Caco-2 (cell line): ENCODE measurements at regions of chr1 and their contacts with region 1.

Region 1: DNA sequence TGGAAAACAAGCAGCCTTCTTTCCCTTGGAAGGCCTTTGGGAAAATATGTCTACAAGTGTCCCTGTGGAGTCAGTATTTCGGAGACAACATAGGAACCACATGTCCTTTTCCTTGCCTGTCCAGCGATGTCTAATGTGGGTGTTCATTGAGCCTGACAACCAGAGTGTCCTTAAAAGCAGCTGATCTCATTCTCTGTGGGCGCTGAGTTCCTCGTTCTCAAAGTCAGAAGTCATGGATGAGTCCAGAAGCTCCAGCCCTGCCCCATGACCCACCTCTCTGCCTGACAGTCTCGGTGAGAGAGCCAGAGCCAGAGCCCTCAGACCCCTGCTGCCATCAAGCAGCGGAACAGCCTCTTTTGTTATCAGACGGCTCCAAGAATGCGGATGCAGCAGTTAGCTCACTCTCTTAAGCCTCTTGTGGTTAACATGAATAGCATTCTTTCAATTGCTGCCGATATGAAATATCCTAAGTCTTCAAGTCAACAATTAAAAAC is 329.2 kb downstream of the TGFB2 start:
- DNase-seq: peak; percentile 72 to 82
- H3K4me3 ChIP-seq: no peak overlapping the region
- H3K4me3 Mint-ChIP-seq: peak overlapping the region; percentile 25
- H3K27ac Mint-ChIP-seq: peak overlapping the region; percentile 79
- H3K4me1 ChIP-seq: peaks cover 12% of the 10 kb centered on the region
- H3K4me1 Mint-ChIP-seq: peaks cover 8% of the 10 kb centered on the region
- H3K27me3 ChIP-seq: no peaks in the 10 kb centered on the region
- H3K27me3 Mint-ChIP-seq: no peaks in the 10 kb centered on the region
- CTCF ChIP-seq: peak in 1 of 2 experiments; percentile 29

Region 2: DNA sequence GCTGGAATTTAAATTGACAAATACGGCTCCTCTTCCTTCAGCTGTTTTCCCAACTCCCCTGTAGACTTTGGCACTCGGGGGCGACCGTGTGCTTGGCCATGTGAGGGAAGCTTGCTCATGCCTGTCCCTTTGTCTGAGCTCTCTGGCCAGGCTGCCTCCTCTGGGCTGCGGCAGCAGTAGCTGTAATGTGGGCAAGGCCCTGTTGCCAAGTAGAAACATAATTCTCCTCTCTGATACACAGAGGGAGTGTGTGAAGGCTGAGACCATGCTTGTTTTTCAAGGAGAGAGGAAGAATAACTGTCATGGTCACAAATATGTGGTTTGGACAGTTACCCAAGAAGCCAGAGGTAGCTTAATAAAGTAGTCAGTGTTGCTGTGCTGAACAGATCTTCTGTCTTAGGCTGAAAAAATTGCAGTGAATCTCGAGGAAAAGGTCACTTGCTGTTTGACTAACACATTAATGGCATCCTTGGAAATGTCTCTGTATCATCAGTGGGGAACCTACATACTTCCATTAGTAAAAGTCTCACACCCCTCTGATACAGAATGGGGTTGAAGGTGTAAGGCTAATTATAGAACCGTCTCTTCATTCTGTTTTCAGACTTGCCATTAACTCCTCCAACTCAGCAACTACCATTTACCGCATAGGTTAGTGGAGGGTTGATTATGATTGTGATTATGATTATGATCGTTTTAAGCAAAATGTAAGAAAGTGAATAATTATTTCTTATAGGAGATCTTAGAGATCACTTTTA is 234.6 kb before region 1 on chr1:
- CTCF ChIA-PET with region 1: no interaction called
- POLR2A ChIA-PET with region 1: no interaction called
- intact Hi-C with region 1: no loop called
- DNase-seq: no peak
- H3K4me3 ChIP-seq: no peak overlapping the region
- H3K4me3 Mint-ChIP-seq: no peak overlapping the region
- H3K27ac Mint-ChIP-seq: no peak overlapping the region
- H3K4me1 ChIP-seq: no peaks in the 10 kb centered on the region
- H3K4me1 Mint-ChIP-seq: no peaks in the 10 kb centered on the region
- H3K27me3 ChIP-seq: no peaks in the 10 kb centered on the region
- H3K27me3 Mint-ChIP-seq: no peaks in the 10 kb centered on the region
- CTCF ChIP-seq: no peak

Region 3: GRCh38 chr1:218557731-218558130 is 116.6 kb before region 1 on chr1:
- CTCF ChIA-PET with region 1: no interaction called
- POLR2A ChIA-PET with region 1: no interaction called
- intact Hi-C with region 1: loop called (anchors 10 kb)
- DNase-seq: no peak
- H3K4me3 ChIP-seq: no peak overlapping the region
- H3K4me3 Mint-ChIP-seq: no peak overlapping the region
- H3K27ac Mint-ChIP-seq: no peak overlapping the region
- H3K4me1 ChIP-seq: no peaks in the 10 kb centered on the region
- H3K4me1 Mint-ChIP-seq: peaks cover 6% of the 10 kb centered on the region
- H3K27me3 ChIP-seq: no peaks in the 10 kb centered on the region
- H3K27me3 Mint-ChIP-seq: no peaks in the 10 kb centered on the region
- CTCF ChIP-seq: no peak

Region 4: DNA sequence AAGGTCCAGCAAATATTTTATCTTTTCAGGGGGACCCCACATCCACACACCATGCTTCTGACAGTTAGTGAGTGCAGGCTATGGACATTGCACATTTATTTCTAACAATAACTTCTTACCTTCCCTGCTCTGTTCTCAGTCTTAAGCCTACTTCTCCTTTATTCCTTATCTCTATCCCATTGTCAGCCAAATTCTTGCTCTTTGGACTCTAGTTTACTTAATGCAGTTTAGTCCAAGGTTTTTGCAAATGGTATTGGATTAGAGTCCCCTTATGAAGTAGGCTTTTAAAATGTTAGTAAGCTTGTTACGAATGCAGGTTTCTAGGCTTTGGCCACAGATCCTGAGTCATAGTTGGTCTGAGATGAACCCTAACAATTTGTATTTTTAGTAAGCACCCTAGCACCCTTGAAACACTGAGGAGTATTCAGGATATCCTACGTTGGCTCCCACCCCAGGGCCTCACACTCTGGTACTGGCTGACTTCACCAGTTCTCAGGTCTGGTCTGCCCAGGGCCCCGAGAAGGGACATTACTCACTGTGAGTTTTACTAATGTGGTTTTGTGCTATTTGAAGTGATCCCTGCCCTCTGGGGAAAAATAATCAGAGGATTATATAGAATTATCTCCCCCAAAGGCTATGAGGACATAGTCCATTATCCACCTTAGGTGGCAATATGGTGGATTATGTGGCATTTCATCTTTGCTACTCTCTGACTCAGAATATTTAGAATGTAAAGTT is 89.7 kb before region 1 on chr1:
- CTCF ChIA-PET with region 1: no interaction called
- POLR2A ChIA-PET with region 1: no interaction called
- intact Hi-C with region 1: loop called (anchors 1 kb)
- DNase-seq: peak; percentile 41 to 46
- H3K4me3 ChIP-seq: no peak overlapping the region
- H3K4me3 Mint-ChIP-seq: peak overlapping the region; percentile 12
- H3K27ac Mint-ChIP-seq: peak overlapping the region; percentile 72
- H3K4me1 ChIP-seq: peaks cover 30% of the 10 kb centered on the region
- H3K4me1 Mint-ChIP-seq: peaks cover 27% of the 10 kb centered on the region
- H3K27me3 ChIP-seq: no peaks in the 10 kb centered on the region
- H3K27me3 Mint-ChIP-seq: no peaks in the 10 kb centered on the region
- CTCF ChIP-seq: no peak

Region 5: DNA sequence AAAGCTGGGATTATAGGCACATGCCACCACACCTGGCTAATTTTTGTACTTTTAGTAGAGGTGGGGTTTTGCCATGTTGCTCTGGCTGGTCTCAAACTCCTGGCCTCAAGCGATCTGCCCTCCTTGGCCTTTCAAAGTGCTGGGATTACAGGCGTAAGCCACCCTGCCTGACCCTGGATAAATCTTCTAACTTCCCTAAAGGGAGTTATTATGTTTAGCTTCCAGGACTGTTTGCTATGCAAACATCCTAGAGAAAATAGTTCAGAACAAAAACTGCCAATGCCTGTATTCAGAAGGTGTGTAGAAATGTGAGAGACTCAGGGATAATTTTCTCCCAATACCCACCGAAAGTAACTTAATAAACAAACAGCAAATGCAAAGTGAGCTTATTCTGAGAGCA is 28.1 kb before region 1 on chr1:
- CTCF ChIA-PET with region 1: no interaction called
- POLR2A ChIA-PET with region 1: no interaction called
- intact Hi-C with region 1: loop called (anchors 2 kb)
- DNase-seq: no peak
- H3K4me3 ChIP-seq: no peak overlapping the region
- H3K4me3 Mint-ChIP-seq: peak overlapping the region; percentile 43
- H3K27ac Mint-ChIP-seq: peak overlapping the region; percentile 27
- H3K4me1 ChIP-seq: peaks cover 7% of the 10 kb centered on the region
- H3K4me1 Mint-ChIP-seq: peaks cover 8% of the 10 kb centered on the region
- H3K27me3 ChIP-seq: no peaks in the 10 kb centered on the region
- H3K27me3 Mint-ChIP-seq: no peaks in the 10 kb centered on the region
- CTCF ChIP-seq: no peak

Region 6: DNA sequence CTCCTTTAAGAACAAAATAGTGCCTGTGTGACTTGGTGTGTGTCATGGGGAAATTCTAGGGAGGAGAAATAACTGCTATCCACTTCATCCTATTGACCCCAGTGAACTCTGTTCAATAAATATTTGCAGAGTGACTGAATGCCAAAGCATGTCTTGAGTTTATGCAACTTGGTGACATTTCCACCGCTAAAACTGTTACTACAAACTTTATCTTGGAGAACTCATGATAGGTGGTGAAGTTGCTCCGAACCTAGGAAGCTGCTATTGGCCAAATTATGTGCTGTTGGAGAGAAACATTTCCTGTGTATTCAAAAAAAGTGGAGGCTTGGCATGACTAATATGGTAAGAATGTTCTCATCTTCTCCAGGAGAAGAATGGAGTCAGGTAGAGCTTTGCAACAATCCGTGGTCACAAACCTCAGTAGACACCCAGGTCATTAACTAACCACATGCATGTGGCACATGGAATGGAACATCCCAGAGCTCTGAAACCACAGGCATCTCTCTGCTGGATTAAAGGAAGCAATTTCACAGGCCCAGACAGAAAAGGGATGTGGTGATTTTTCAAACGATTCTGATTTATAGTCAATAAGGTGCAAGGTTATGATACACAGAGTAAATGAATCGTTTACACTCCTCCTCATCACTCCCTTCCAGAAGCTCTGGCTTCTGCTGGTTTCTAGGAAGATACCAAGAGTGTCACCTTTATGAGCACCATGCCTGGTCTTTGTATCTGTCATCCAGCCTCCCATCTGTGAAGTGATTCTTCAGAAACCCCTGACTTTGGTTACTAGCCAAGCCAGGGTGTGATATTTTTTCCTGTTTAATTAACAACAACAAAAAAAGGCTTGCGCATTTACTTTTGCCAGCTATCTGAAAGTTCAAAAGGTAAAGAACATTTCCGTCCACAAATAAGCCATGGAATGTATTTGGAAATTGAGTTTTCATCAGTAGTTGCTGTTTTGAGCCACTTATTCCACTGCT is 31.9 kb after region 1 on chr1:
- CTCF ChIA-PET with region 1: no interaction called
- POLR2A ChIA-PET with region 1: no interaction called
- intact Hi-C with region 1: loop called (anchors 1 kb)
- DNase-seq: peak; percentile 52 to 59
- H3K4me3 ChIP-seq: no peak overlapping the region
- H3K4me3 Mint-ChIP-seq: peak overlapping the region; percentile 48
- H3K27ac Mint-ChIP-seq: peak overlapping the region; percentile 88
- H3K4me1 ChIP-seq: peaks cover 17% of the 10 kb centered on the region
- H3K4me1 Mint-ChIP-seq: peaks cover 12% of the 10 kb centered on the region
- H3K27me3 ChIP-seq: no peaks in the 10 kb centered on the region
- H3K27me3 Mint-ChIP-seq: no peaks in the 10 kb centered on the region
- CTCF ChIP-seq: no peak

Region 7: DNA sequence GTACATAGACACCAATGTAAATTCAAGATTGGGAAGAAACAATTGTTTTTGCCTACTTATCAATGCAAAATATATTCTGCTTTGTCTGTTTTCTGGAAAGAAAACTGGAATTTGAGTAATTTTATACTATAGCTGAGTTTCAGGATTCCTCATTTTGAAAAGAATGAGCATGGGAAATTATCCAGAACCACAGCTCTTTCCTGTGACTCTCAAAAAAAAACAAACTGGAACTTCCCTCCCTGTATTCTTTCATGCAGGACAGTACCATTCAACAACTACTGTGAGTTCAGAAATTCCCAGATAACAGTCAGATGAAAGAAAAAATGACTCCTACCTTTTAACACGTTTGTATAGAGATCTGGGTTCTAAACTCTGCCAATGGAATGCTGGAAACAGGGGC is 43.2 kb after region 1 on chr1:
- CTCF ChIA-PET with region 1: no interaction called
- POLR2A ChIA-PET with region 1: no interaction called
- intact Hi-C with region 1: no loop called
- DNase-seq: no peak
- H3K4me3 ChIP-seq: no peak overlapping the region
- H3K4me3 Mint-ChIP-seq: no peak overlapping the region
- H3K27ac Mint-ChIP-seq: no peak overlapping the region
- H3K4me1 ChIP-seq: no peaks in the 10 kb centered on the region
- H3K4me1 Mint-ChIP-seq: no peaks in the 10 kb centered on the region
- H3K27me3 ChIP-seq: no peaks in the 10 kb centered on the region
- H3K27me3 Mint-ChIP-seq: no peaks in the 10 kb centered on the region
- CTCF ChIP-seq: no peak

Region 8: DNA sequence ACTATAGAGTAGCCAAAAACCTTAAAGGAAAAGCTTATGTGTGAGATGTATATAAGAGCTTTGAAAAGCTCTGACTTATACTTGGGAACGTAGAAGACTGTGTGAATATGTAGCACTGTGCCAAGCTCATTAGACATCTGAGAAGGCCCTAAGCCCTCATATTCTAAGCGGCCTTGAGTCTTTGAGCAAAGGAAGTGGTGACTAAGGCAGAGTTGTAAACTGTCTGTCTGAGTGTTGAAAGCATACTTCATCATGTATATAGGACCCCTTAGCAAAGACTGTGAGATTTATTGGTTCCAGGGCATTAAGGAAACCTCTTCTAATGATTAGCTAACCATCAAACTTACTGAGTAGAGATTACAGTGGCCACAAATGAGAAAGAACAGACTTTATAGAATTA is 346.1 kb after region 1 on chr1:
- CTCF ChIA-PET with region 1: no interaction called
- POLR2A ChIA-PET with region 1: no interaction called
- intact Hi-C with region 1: no loop called
- DNase-seq: no peak
- H3K4me3 ChIP-seq: no peak overlapping the region
- H3K4me3 Mint-ChIP-seq: no peak overlapping the region
- H3K27ac Mint-ChIP-seq: no peak overlapping the region
- H3K4me1 ChIP-seq: no peaks in the 10 kb centered on the region
- H3K4me1 Mint-ChIP-seq: no peaks in the 10 kb centered on the region
- H3K27me3 ChIP-seq: no peaks in the 10 kb centered on the region
- H3K27me3 Mint-ChIP-seq: no peaks in the 10 kb centered on the region
- CTCF ChIP-seq: no peak